Breast epithelium (tissue), 4 donors: ENCODE measurements at regions of chr5 and their contacts with region 1.

Region 1: GRCh38 chr5:170166101-170166500 is 60.4 kb downstream of the FOXI1 start:
- DNase-seq: no peak
- H3K4me3 ChIP-seq: no peak overlapping the region
- H3K27ac ChIP-seq: no peak overlapping the region
- H3K4me1 ChIP-seq: no peaks in the 10 kb centered on the region
- H3K27me3 ChIP-seq: no peaks in the 10 kb centered on the region
- CTCF ChIP-seq: no peak
- POLR2A ChIP-seq: no peak

Region 2: DNA sequence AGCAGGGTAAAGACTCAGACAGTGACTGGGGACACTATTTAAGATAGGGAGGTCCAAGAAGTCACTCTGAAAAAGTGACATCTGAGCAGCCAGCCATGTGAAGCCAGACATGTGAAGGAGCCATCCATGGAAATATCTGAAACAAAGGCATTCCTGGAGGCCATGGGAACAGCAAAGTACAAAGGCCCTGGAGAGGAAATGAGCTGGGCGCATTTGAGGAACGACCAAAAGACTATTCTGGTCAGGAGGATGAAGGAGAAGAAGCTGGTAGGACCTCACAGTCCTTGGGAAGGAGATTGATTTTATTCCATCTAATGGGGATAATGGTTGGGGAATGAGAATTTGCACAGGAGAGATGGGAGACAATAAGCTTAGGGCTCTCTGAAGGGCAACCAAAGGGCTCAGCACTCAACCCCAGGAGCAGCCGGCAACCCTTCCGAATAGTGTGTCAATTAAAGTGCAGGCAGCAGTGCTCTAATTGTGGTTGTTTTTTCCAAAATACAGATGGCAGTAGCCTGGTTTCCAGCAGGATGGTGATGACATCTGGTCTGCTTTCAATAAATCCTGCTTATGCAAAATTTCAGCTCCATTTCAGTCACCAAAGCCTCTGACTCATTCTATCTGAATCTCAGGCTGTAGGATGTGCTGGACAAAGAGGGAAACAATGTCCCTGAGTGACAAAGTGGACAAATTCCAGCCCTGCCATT is 33.7 kb before region 1 on chr5:
- intact Hi-C with region 1: loop called (anchors 1 kb)
- DNase-seq: no peak
- H3K4me3 ChIP-seq: no peak overlapping the region
- H3K27ac ChIP-seq: no peak overlapping the region
- H3K4me1 ChIP-seq: no peaks in the 10 kb centered on the region
- H3K27me3 ChIP-seq: no peaks in the 10 kb centered on the region
- CTCF ChIP-seq: no peak
- POLR2A ChIP-seq: no peak

Region 3: DNA sequence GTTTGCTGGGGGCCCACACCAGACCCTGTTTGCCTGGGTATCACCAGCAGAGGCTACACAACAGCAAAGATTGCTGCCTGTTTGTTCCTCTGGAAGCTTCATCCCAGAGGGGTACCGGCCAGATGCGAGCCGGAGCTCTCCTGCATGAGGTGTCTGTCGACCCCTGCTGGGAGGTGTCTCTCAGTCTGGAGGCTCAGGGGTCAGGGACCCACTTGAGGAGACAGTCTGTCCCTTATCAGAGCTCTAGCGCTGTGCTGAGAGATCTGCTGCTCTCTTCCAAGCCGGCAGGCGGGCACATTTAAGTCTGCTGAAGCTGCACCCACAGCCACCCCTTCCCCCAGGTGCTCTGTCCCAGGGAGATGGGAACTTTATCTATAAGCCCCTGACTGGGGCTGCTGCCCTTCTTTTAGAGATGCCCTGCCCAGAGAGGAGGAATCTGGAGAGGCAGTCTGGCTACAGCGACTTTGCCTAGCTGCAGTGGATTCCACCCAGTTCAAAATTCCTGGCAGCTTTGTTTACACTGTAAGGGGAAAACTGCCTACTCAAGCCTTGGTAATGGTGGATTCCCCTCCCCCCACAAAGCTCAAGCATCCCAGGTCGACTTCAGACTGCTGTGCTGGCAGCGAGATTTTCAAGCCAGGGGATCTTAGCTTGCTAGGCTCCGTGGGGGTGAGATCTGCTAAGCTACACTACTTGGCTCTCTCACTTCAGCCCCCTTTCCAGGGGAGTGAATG is 936.9 kb after region 1 on chr5:
- intact Hi-C with region 1: no loop called
- DNase-seq: no peak
- H3K4me3 ChIP-seq: no peak overlapping the region
- H3K27ac ChIP-seq: no peak overlapping the region
- H3K4me1 ChIP-seq: no peaks in the 10 kb centered on the region
- H3K27me3 ChIP-seq: no peaks in the 10 kb centered on the region
- CTCF ChIP-seq: no peak
- POLR2A ChIP-seq: no peak